Right cardiac atrium (tissue), 5 donors: ENCODE measurements at regions of chr4 and their contacts with region 1.

Region 1: GRCh38 chr4:124295413-124295812 is 417.1 kb downstream of the ANKRD50 start:
- DNase-seq: no peak
- ATAC-seq: no peak
- H3K4me3 ChIP-seq: no peak overlapping the region
- H3K27ac ChIP-seq: no peak overlapping the region
- H3K4me1 ChIP-seq: no peaks in the 10 kb centered on the region
- H3K27me3 ChIP-seq: no peaks in the 10 kb centered on the region

Region 2: DNA sequence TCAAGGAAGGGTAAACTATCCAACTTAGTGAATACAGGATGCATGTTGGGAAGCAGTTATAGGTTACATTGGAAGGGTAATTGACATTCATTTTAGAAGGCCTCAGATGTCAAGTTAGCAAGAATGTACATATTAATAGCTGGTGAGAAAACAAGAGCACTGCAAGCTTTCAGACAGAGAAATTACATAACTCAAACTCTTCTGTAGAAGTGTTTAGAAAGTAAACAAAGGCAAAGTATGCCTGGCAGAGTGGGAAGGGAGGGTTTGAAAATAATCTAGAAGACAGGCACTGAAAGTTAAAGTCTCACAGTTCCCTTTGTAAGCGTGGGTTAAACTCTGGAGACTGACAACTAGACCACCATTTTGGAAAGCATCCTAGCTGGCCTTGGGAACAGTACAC is 10.9 kb after region 1 on chr4:
- intact Hi-C with region 1: loop called in 1 of 4 experiments (anchors 1 kb)
- DNase-seq: no peak
- ATAC-seq: no peak
- H3K4me3 ChIP-seq: no peak overlapping the region
- H3K27ac ChIP-seq: no peak overlapping the region
- H3K4me1 ChIP-seq: no peaks in the 10 kb centered on the region
- H3K27me3 ChIP-seq: no peaks in the 10 kb centered on the region